Activated B cell treated with CpG ODN at 0.5 μM for 24 hours (primary cell): ENCODE measurements at regions of chr11 and their contacts with region 1.

Region 1: DNA sequence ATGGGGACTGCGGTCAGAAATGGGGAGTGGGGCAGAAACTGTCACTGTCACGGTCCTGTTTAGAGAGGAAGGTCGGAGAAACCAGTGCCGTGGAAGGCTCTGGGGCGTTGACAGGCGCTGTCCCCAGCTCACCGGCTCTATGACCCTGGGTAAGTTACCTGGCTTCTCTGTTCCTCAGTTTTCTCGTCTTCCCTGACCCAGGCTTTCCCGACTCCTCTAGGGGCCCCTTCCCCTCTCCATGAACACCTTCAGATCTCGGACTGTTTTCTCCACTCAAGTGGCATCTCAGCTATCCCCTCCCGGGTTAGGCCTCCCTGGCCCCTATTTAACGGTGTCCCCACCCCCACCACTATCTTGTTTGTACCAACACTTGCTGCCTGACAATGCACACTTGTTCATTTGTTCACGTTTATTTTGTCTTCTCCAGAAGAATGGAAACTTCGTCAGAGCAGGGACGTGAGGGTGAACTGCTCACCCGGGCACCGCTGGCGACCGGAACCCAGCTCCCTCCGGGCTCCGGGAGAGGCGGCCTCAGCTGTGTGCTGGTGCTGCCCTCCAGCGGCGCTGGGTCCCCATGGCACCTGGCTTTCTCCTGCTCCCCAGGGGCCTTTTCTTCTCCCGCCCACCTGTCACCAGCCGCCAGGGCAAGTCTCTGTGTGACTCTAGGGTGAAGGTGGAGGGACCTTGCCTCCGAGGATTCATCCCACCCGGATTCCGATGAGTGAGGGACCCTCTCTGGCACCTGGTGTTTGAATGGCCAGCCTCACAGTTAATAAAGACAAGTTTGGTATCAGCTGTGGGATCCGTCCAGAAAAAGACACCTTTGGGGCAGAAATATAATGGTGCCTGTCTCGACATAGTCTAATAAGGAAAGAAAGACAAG is 33.1 kb upstream of the SLC35C1 start:
- DNase-seq: peak; percentile 71
- ATAC-seq: peak; percentile 88
- H3K4me3 Mint-ChIP-seq: peak overlapping the region; percentile 89
- H3K27ac Mint-ChIP-seq: peak overlapping the region; percentile 64
- H3K4me1 Mint-ChIP-seq: peaks cover 9% of the 10 kb centered on the region
- H3K27me3 Mint-ChIP-seq: peaks cover 3% of the 10 kb centered on the region
- CTCF ChIP-seq: no peak

Region 2: GRCh38 chr11:45371251-45372115 is 400.3 kb before region 1 on chr11:
- CTCF ChIA-PET with region 1: interaction called, 14 read pairs
- POLR2A ChIA-PET with region 1: no interaction called
- intact Hi-C with region 1: loop called (anchors 1 kb)
- DNase-seq: peak; percentile 47
- ATAC-seq: peak; percentile 70
- H3K4me3 Mint-ChIP-seq: peak overlapping the region; percentile 16
- H3K27ac Mint-ChIP-seq: no peak overlapping the region
- H3K4me1 Mint-ChIP-seq: peaks cover 20% of the 10 kb centered on the region
- H3K27me3 Mint-ChIP-seq: peaks cover 53% of the 10 kb centered on the region
- CTCF ChIP-seq: peak; percentile 36

Region 3: DNA sequence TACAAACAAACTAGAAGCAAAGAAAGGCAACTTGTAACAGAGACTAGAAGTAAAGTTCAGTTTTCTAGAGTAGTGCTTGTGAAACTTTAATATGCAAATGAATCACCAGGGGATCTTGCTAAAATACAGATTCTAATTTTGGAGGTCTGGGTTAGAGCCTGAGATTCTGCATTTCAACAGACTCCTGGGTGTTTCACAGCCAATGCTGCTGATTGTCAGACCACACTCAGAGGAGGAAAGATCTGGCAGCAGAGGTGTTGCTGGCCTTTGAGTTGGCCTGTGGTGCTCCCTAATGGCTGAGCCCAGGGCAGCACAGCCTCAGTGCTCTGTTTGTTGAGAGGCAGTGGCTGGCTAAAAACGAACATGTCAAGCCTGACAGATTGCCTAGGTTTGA is 80.9 kb after region 1 on chr11:
- CTCF ChIA-PET with region 1: interaction called, 9 read pairs
- POLR2A ChIA-PET with region 1: no interaction called
- intact Hi-C with region 1: loop called (anchors 1 kb)
- DNase-seq: no peak
- ATAC-seq: peak; percentile 35
- H3K4me3 Mint-ChIP-seq: peak overlapping the region; percentile 56
- H3K27ac Mint-ChIP-seq: peak overlapping the region; percentile 85
- H3K4me1 Mint-ChIP-seq: peaks cover 51% of the 10 kb centered on the region
- H3K27me3 Mint-ChIP-seq: no peaks in the 10 kb centered on the region
- CTCF ChIP-seq: no peak

Region 4: GRCh38 chr11:46006418-46007070 is 234.7 kb after region 1 on chr11:
- CTCF ChIA-PET with region 1: interaction called, 54 read pairs
- POLR2A ChIA-PET with region 1: interaction called, 7 read pairs
- intact Hi-C with region 1: loop called (anchors 1 kb)
- DNase-seq: no peak
- ATAC-seq: peak; percentile 76
- H3K4me3 Mint-ChIP-seq: no peak overlapping the region
- H3K27ac Mint-ChIP-seq: no peak overlapping the region
- H3K4me1 Mint-ChIP-seq: peaks cover 3% of the 10 kb centered on the region
- H3K27me3 Mint-ChIP-seq: no peaks in the 10 kb centered on the region
- CTCF ChIP-seq: peak; percentile 20